MCF 10A (cell line): ENCODE measurements at regions of chr3 and their contacts with region 1.

Region 1: DNA sequence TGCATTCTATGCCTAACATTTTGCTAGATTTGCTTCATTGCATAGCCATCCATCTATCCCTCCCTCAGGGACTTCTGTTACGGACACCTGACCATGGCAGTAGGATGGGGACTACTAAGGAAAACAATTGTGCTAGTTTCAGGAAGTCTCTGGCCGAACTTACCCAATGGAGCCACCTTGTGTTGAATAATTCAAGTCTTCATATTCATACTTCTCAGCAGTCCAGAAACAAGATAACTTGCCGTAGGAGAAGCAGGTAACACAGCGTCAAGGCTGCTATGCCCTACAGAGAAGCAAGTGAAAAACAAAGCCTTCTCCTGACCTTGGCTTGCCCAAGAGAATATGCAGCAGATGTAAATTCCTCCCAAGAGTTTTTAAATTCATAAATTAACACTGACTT is 685.3 kb downstream of the GRM7 start:
- DNase-seq: peak; percentile 44
- H3K4me3 Mint-ChIP-seq: no peak overlapping the region
- H3K27ac Mint-ChIP-seq: no peak overlapping the region
- H3K4me1 Mint-ChIP-seq: peaks cover 6% of the 10 kb centered on the region
- H3K27me3 Mint-ChIP-seq: no peaks in the 10 kb centered on the region
- CTCF ChIP-seq: peak; percentile 34

Region 2: DNA sequence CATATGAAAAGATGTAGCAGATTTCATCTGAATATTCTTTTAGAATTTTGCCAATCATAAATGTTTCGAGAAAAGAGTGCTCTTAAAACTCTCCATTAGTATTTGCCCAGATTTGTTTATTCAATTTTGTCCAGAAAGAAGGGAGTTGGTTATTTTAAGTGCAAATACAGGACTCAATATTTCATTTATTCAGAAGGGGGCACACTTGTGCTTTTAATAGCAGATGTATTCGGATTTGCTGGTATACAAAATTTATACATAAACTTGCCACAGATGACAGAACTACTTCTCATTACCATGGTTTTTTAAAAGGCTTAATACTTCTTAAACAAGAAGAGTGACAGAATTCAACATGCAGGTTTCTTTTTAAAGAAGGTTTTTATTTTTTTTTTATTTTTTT is 755.1 kb before region 1 on chr3:
- CTCF ChIA-PET with region 1: no interaction called
- POLR2A ChIA-PET with region 1: no interaction called
- intact Hi-C with region 1: loop called (anchors 5 kb)
- DNase-seq: no peak
- H3K4me3 Mint-ChIP-seq: no peak overlapping the region
- H3K27ac Mint-ChIP-seq: no peak overlapping the region
- H3K4me1 Mint-ChIP-seq: no peaks in the 10 kb centered on the region
- H3K27me3 Mint-ChIP-seq: no peaks in the 10 kb centered on the region
- CTCF ChIP-seq: peak; percentile 28

Region 3: GRCh38 chr3:6994081-6994668 is 552.1 kb before region 1 on chr3:
- CTCF ChIA-PET with region 1: no interaction called
- POLR2A ChIA-PET with region 1: no interaction called
- intact Hi-C with region 1: loop called (anchors 10 kb)
- DNase-seq: peak; percentile 15
- H3K4me3 Mint-ChIP-seq: no peak overlapping the region
- H3K27ac Mint-ChIP-seq: no peak overlapping the region
- H3K4me1 Mint-ChIP-seq: peaks cover 6% of the 10 kb centered on the region
- H3K27me3 Mint-ChIP-seq: no peaks in the 10 kb centered on the region
- CTCF ChIP-seq: peak; percentile 32

Region 4: GRCh38 chr3:7285505-7285904 is 260.7 kb before region 1 on chr3:
- CTCF ChIA-PET with region 1: interaction called, 5 read pairs
- POLR2A ChIA-PET with region 1: no interaction called
- intact Hi-C with region 1: loop called (anchors 1 kb)
- DNase-seq: peak; percentile 51
- H3K4me3 Mint-ChIP-seq: no peak overlapping the region
- H3K27ac Mint-ChIP-seq: no peak overlapping the region
- H3K4me1 Mint-ChIP-seq: peaks cover 2% of the 10 kb centered on the region
- H3K27me3 Mint-ChIP-seq: no peaks in the 10 kb centered on the region
- CTCF ChIP-seq: peak; percentile 48

Region 5: DNA sequence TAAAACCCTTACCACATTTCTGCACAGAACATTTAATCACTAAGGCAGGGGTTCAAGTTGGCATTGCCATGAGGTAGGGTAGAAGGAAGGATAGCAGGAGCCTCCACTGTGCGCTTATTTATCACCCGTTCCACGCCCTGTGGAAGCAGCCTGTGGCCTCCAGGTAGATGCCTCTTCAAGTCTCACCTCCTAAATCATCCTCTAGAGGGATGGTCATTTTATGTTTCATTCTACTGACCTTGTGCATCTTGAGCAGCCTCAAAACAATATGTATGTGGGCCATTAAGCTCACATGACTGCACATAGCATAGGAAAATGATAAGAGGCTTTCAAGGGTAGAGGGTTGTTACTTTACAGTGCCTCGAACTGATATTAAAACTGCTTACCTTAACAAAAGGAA is 139.1 kb before region 1 on chr3:
- CTCF ChIA-PET with region 1: no interaction called
- POLR2A ChIA-PET with region 1: no interaction called
- intact Hi-C with region 1: loop called (anchors 10 kb)
- DNase-seq: peak; percentile 11
- H3K4me3 Mint-ChIP-seq: no peak overlapping the region
- H3K27ac Mint-ChIP-seq: no peak overlapping the region
- H3K4me1 Mint-ChIP-seq: peaks cover 7% of the 10 kb centered on the region
- H3K27me3 Mint-ChIP-seq: no peaks in the 10 kb centered on the region
- CTCF ChIP-seq: no peak